ENCODE measurements at regions of chr13 and their contacts with region 1.

Region 1: GRCh38 chr13:77213644-77214043 is 113.2 kb downstream of the MYCBP2 start:
- DNase-seq: no peak
- ATAC-seq: peak; percentile 76
- H3K4me3 Mint-ChIP-seq: no peak overlapping the region
- H3K27ac Mint-ChIP-seq: peak overlapping the region; percentile 70
- H3K4me1 Mint-ChIP-seq: peaks cover 20% of the 10 kb centered on the region
- H3K27me3 Mint-ChIP-seq: no peaks in the 10 kb centered on the region

Region 2: GRCh38 chr13:77150651-77151050 is 63.0 kb before region 1 on chr13:
- CTCF ChIA-PET with region 1: no interaction called
- POLR2A ChIA-PET with region 1: no interaction called
- intact Hi-C with region 1: no loop called
- DNase-seq: no peak
- ATAC-seq: no peak
- H3K4me3 Mint-ChIP-seq: no peak overlapping the region
- H3K27ac Mint-ChIP-seq: no peak overlapping the region
- H3K4me1 Mint-ChIP-seq: no peaks in the 10 kb centered on the region
- H3K27me3 Mint-ChIP-seq: no peaks in the 10 kb centered on the region

Region 3: DNA sequence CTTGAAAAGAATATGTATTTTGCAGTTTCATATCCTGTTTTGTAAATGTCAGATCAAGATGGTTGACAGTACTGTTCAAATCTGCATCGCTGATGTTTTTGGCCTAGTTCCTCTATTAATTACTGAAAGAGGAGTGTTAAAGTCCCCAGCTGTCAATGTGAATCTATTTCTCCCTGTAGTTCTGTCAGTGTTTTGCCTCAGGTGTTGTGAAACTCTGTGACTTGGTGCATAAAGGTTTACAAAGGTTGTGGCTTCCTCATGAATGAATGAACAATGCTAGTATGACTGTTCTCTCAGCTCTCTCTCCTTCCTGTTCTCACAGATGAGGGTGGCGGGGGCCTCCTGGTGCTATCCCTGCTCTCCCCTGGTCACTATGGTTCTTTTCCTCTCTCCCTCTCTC is 29.2 kb before region 1 on chr13:
- CTCF ChIA-PET with region 1: no interaction called
- POLR2A ChIA-PET with region 1: no interaction called
- intact Hi-C with region 1: loop called in 1 of 2 experiments (anchors 2 kb)
- DNase-seq: peak; percentile 74
- ATAC-seq: peak; percentile 99
- H3K4me3 Mint-ChIP-seq: no peak overlapping the region
- H3K27ac Mint-ChIP-seq: peak overlapping the region; percentile 79
- H3K4me1 Mint-ChIP-seq: peaks cover 17% of the 10 kb centered on the region
- H3K27me3 Mint-ChIP-seq: no peaks in the 10 kb centered on the region

Measured in activated CD4-positive, alpha-beta T cell treated with anti-CD3 and anti-CD28 coated beads for 36 hours (primary cell).